ENCODE measurements at regions of chr15 and their contacts with region 1.

Region 1: GRCh38 chr15:34101366-34102175 is at the starts of genes EMC7 and PGBD4:
- DNase-seq: peak; percentile 99
- H3K4me3 Mint-ChIP-seq: peak within 1 kb of the TSS; percentile 98
- H3K27ac Mint-ChIP-seq: peak within 1 kb of the TSS; percentile 100
- H3K4me1 Mint-ChIP-seq: peaks cover 43% of the 10 kb centered on the region
- H3K27me3 Mint-ChIP-seq: no peaks in the 10 kb centered on the region
- total RNA-seq, gene EMC7: 77.1 and 81.3 TPM in 2 replicates
- total RNA-seq, gene PGBD4: 3.9 TPM in 2 replicates

Region 2: DNA sequence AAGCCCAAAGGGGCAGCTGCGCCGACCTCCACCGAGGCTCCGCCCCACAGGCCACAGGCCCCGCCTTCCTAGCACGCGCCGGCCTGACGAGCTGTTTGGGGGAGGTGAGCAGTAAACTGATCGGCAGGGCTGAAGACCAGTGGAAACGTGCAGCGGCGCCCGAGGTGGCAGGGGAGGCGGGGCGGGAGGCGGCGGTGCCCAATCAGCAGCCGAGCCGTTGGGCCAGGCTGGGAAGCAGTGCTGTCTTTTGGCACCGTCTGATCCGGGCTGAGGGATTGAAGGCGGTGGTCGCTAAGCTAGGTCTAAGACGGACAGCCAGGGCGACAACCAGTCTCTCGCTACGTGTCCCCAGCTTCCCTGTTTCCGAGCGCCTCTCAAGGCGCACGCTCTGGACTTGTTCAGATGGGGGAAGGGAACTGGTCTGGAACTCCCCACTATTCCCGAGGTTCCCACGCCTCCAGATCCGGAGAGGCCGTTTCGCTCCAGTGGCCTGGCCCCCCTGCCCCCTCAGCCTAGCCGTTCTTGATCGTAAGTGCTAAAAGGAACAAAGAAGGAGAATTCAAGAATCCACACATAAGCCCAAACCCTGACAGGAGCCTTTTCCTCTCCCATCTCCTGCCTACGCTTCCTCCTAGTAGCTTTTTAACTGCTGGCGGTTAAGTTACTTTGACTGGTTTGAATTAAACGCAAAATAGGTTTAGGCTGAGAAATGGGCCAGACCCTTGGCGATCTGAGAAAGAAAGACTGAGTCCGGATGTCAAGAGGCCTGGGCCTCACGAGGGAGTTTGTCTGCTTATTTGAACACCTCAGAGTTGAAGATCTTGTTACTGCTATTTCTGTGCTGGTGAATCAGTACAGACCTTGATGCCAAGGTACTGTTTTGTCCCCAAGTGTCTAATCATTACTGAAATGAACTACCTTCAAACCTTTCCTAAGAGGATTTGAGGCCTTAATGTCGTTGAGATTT is 906.6 kb before region 1 on chr15 and contains the start of gene FMN1:
- intact Hi-C with region 1: loop called (anchors 10 kb)
- DNase-seq: peak; percentile 85
- H3K4me3 Mint-ChIP-seq: peak within 1 kb of the TSS; percentile 81
- H3K27ac Mint-ChIP-seq: peak within 1 kb of the TSS; percentile 38
- H3K4me1 Mint-ChIP-seq: peaks cover 19% of the 10 kb centered on the region
- H3K27me3 Mint-ChIP-seq: peaks cover 36% of the 10 kb centered on the region
- total RNA-seq, gene FMN1: 0.03 TPM in 1 of 2 replicates, not detected in the other

Region 3: DNA sequence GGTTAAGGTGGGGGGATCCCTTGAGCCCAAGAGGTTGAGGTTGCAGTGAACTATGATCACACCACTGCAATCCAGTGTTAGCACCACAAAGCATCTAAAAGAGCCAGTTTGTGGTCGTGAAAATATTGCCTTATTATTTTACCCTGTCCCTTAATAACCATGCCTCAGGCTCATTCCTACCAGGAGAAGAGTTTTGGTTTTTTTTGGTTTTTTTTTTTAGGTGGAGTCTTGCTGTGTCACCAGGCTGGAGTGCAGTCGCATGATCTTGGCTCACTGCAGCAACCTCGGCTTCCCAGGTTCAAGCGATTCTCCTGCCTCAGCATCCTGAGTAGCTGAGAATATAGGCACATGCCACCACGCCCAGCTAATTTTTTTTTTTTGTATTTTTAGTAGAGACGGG is 44.6 kb before region 1 on chr15:
- intact Hi-C with region 1: loop called (anchors 2 kb)
- DNase-seq: no peak
- H3K4me3 Mint-ChIP-seq: no peak overlapping the region
- H3K27ac Mint-ChIP-seq: no peak overlapping the region
- H3K4me1 Mint-ChIP-seq: no peaks in the 10 kb centered on the region
- H3K27me3 Mint-ChIP-seq: peaks cover 5% of the 10 kb centered on the region

Region 4: GRCh38 chr15:34223904-34224596 is 122.5 kb after region 1 on chr15:
- intact Hi-C with region 1: loop called (anchors 1 kb)
- DNase-seq: no peak
- H3K4me3 Mint-ChIP-seq: peak overlapping the region; percentile 90
- H3K27ac Mint-ChIP-seq: peak overlapping the region; percentile 98
- H3K4me1 Mint-ChIP-seq: peaks cover 35% of the 10 kb centered on the region
- H3K27me3 Mint-ChIP-seq: no peaks in the 10 kb centered on the region

Region 5: GRCh38 chr15:34367101-34368081 is 265.8 kb after region 1 on chr15 and contains the start of gene LPCAT4:
- intact Hi-C with region 1: loop called (anchors 2 kb)
- DNase-seq: peak; percentile 88
- H3K4me3 Mint-ChIP-seq: peak within 1 kb of the TSS; percentile 98
- H3K27ac Mint-ChIP-seq: peak within 1 kb of the TSS; percentile 97
- H3K4me1 Mint-ChIP-seq: peaks cover 39% of the 10 kb centered on the region
- H3K27me3 Mint-ChIP-seq: no peaks in the 10 kb centered on the region
- total RNA-seq, gene LPCAT4: 78.0 and 80.8 TPM in 2 replicates

Region 6: GRCh38 chr15:34587717-34588674 is 486.4 kb after region 1 on chr15:
- intact Hi-C with region 1: loop called (anchors 5 kb)
- DNase-seq: peak; percentile 48
- H3K4me3 Mint-ChIP-seq: peak overlapping the region; percentile 83
- H3K27ac Mint-ChIP-seq: peak overlapping the region; percentile 52
- H3K4me1 Mint-ChIP-seq: peaks cover 19% of the 10 kb centered on the region
- H3K27me3 Mint-ChIP-seq: peaks cover 30% of the 10 kb centered on the region

Region 7: GRCh38 chr15:34987985-34988873 is 886.7 kb after region 1 on chr15 and contains the start of gene ZNF770:
- intact Hi-C with region 1: loop called (anchors 1 kb)
- DNase-seq: peak; percentile 84
- H3K4me3 Mint-ChIP-seq: peak within 1 kb of the TSS; percentile 97
- H3K27ac Mint-ChIP-seq: peak within 1 kb of the TSS; percentile 96
- H3K4me1 Mint-ChIP-seq: peaks cover 44% of the 10 kb centered on the region
- H3K27me3 Mint-ChIP-seq: no peaks in the 10 kb centered on the region
- total RNA-seq, gene ZNF770: 50.1 and 50.6 TPM in 2 replicates

Measured in activated T-helper 1 cell treated with anti-CD3 and anti-CD28 coated beads, Interleukin-12 subunit alpha, Interleukin-12 subunit beta, Interleukin-2, Interleukin-4 antibody, amounts not matched to agents 30 ng/mL and 10 ng/mL and 1 ng/mL, durations not matched to agents 14 hours and 24 hours and 36 hours (primary cell).